Naive thymus-derived CD4-positive, alpha-beta T cell (primary cell): ENCODE measurements at regions of chr2 and their contacts with region 1.

Region 1: GRCh38 chr2:30231212-30231995 is at the start of gene LBH:
- DNase-seq: peak; percentile 74 to 92 (median 88)
- ATAC-seq: peak; percentile 72
- H3K4me3 ChIP-seq: peak within 1 kb of the TSS; percentile 75
- H3K4me3 Mint-ChIP-seq: peak within 1 kb of the TSS; percentile 87 to 98 (median 94)
- H3K27ac ChIP-seq: peak within 1 kb of the TSS; percentile 97
- H3K27ac Mint-ChIP-seq: peak within 1 kb of the TSS; percentile 87 to 100 (median 96)
- H3K4me1 ChIP-seq: peaks cover 49 to 55% of the 10 kb centered on the region in 2 donors
- H3K4me1 Mint-ChIP-seq: peaks cover 26 to 65% (median 57%) of the 10 kb centered on the region in 7 donors
- H3K27me3 ChIP-seq: no peaks in the 10 kb centered on the region
- H3K27me3 Mint-ChIP-seq: peaks cover 0 to 8% (median 0%) of the 10 kb centered on the region in 5 donors
- total RNA-seq, gene LBH: 146 to 517 (median 192) TPM

Region 2: DNA sequence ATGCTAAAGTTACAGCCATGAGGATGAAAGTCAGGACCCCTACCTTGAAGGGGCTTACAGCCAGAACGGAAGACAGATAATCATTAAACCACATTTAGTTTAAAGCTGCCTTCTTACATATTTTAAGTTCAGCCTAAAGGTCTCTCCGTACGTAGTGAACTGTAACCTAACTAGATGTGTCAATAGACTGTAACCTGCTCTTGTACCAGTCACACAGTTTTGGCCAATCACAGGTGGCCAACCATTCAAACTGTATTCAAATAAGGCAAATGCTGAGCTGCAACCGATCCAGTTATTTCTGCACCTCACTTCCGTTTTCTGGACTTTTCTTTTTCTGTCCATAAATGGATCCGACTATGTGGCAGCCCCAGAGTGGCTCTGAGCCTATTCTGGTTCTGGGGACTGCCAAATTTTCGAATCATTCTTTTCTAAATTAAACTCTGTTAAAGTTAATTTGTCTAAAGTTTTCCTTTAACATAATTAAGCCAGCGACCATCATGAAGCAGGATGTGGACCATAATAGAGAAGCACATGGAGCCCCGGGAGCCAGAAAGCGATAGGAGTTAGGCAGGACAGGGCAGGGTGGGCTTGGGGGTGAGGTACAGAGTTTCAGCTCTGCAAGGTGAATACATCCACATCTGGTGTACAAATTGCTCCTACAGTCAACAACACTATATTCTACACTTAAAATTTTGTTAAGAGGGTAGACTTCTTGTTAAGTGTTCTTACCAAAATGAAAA is 133.0 kb before region 1 on chr2:
- CTCF ChIA-PET with region 1: no interaction called
- POLR2A ChIA-PET with region 1: no interaction called
- intact Hi-C with region 1: no loop called
- DNase-seq: no peak
- ATAC-seq: no peak
- H3K4me3 ChIP-seq: no peak overlapping the region
- H3K4me3 Mint-ChIP-seq: no peak overlapping the region
- H3K27ac ChIP-seq: no peak overlapping the region
- H3K27ac Mint-ChIP-seq: no peak overlapping the region
- H3K4me1 ChIP-seq: no peaks in the 10 kb centered on the region
- H3K4me1 Mint-ChIP-seq: no peaks in the 10 kb centered on the region
- H3K27me3 ChIP-seq: no peaks in the 10 kb centered on the region
- H3K27me3 Mint-ChIP-seq: peaks cover 12 to 40% (median 23%) of the 10 kb centered on the region in 5 donors

Region 3: DNA sequence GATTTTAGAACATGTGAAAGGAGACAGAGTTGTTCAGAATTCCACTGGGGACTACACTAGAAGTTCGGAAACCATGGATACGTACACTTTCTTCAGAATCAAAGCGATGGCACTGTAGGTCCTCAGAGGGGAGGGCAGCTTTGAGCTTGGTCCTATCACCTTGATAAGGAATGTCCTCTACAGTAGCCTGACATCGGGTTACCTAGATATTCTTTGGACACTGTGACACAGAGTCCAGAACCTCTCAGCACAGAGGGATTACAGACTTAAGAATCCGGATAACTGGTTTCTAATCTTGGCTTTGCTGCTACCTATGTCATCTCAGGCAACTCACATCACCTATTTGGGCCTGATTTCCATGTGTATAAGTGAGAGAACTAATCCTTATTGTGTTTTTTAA is 14.0 kb after region 1 on chr2:
- CTCF ChIA-PET with region 1: interaction called, 19 read pairs
- POLR2A ChIA-PET with region 1: interaction called, 901 read pairs
- intact Hi-C with region 1: loop called in 1 of 2 experiments (anchors 1 kb)
- DNase-seq: no peak
- ATAC-seq: no peak
- H3K4me3 ChIP-seq: no peak overlapping the region
- H3K4me3 Mint-ChIP-seq: peak overlapping the region in 6 of 10 donors; percentile 4 to 77 (median 53)
- H3K27ac ChIP-seq: peak overlapping the region; percentile 56
- H3K27ac Mint-ChIP-seq: peak overlapping the region in 8 of 9 donors; percentile 77 to 100 (median 86)
- H3K4me1 ChIP-seq: peaks cover 58 to 82% of the 10 kb centered on the region in 2 donors
- H3K4me1 Mint-ChIP-seq: peaks cover 61 to 97% (median 91%) of the 10 kb centered on the region in 7 donors
- H3K27me3 ChIP-seq: no peaks in the 10 kb centered on the region
- H3K27me3 Mint-ChIP-seq: no peaks in the 10 kb centered on the region

Region 4: DNA sequence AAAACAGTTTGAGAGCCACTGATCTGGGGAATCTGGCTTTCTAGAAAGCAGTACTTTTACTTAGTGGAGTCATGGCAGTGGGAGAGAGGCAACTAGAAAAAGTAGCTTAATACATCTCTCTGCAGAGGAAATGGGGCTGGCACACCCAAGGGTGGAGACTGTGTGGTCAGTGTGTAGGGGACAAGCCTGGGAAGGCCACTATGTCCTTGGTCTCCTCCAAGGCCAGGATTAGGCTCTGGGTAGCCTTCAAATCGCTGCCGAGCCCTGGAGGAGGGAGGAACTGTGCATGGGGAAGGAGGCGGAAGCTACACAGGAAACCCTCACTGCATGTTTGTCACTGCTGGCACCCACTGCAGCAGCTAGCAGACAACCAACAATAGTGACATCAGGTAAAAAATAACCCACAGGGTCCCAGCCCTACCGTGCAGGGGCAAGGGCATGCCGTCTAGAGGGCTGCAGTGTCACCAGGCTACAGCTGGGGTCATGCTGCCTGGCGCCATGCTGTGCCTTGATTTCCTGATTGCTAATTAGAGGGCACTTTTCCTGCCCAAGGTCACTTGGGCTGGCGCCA is 34.7 kb after region 1 on chr2:
- CTCF ChIA-PET with region 1: interaction called, 5 read pairs
- POLR2A ChIA-PET with region 1: interaction called, 901 read pairs
- intact Hi-C with region 1: loop called (anchors 1 kb)
- DNase-seq: peak; percentile 25 to 80 (median 75)
- ATAC-seq: peak; percentile 95
- H3K4me3 ChIP-seq: peak overlapping the region; percentile 44
- H3K4me3 Mint-ChIP-seq: peak overlapping the region; percentile 68 to 92 (median 84)
- H3K27ac ChIP-seq: peak overlapping the region; percentile 82
- H3K27ac Mint-ChIP-seq: peak overlapping the region; percentile 89 to 100 (median 97)
- H3K4me1 ChIP-seq: peaks cover 46 to 65% of the 10 kb centered on the region in 2 donors
- H3K4me1 Mint-ChIP-seq: peaks cover 44 to 94% (median 86%) of the 10 kb centered on the region in 7 donors
- H3K27me3 ChIP-seq: no peaks in the 10 kb centered on the region
- H3K27me3 Mint-ChIP-seq: no peaks in the 10 kb centered on the region

Region 5: GRCh38 chr2:30421604-30422443 is 190.4 kb after region 1 on chr2:
- CTCF ChIA-PET with region 1: interaction called, 4 read pairs
- POLR2A ChIA-PET with region 1: interaction called, 48 read pairs
- intact Hi-C with region 1: loop called (anchors 1 kb)
- DNase-seq: peak in 5 of 9 donors; percentile 24 to 68 (median 44)
- ATAC-seq: peak; percentile 10
- H3K4me3 ChIP-seq: peak overlapping the region; percentile 32
- H3K4me3 Mint-ChIP-seq: peak overlapping the region; percentile 41 to 76 (median 70)
- H3K27ac ChIP-seq: peak overlapping the region; percentile 70
- H3K27ac Mint-ChIP-seq: peak overlapping the region; percentile 91 to 98 (median 93)
- H3K4me1 ChIP-seq: peaks cover 24 to 48% of the 10 kb centered on the region in 2 donors
- H3K4me1 Mint-ChIP-seq: peaks cover 35 to 64% (median 54%) of the 10 kb centered on the region in 7 donors
- H3K27me3 ChIP-seq: no peaks in the 10 kb centered on the region
- H3K27me3 Mint-ChIP-seq: no peaks in the 10 kb centered on the region

Region 6: GRCh38 chr2:30664761-30665358 is 433.5 kb after region 1 on chr2:
- CTCF ChIA-PET with region 1: no interaction called
- POLR2A ChIA-PET with region 1: no interaction called
- intact Hi-C with region 1: no loop called
- DNase-seq: no peak
- ATAC-seq: no peak
- H3K4me3 ChIP-seq: no peak overlapping the region
- H3K4me3 Mint-ChIP-seq: no peak overlapping the region
- H3K27ac ChIP-seq: no peak overlapping the region
- H3K27ac Mint-ChIP-seq: no peak overlapping the region
- H3K4me1 ChIP-seq: no peaks in the 10 kb centered on the region
- H3K4me1 Mint-ChIP-seq: peaks cover 0 to 4% (median 0%) of the 10 kb centered on the region in 7 donors
- H3K27me3 ChIP-seq: no peaks in the 10 kb centered on the region
- H3K27me3 Mint-ChIP-seq: peaks cover 0 to 7% (median 0%) of the 10 kb centered on the region in 5 donors